Head of caudate nucleus (tissue), 42 donors: ENCODE measurements at regions of chr3 and their contacts with region 1.

Region 1: DNA sequence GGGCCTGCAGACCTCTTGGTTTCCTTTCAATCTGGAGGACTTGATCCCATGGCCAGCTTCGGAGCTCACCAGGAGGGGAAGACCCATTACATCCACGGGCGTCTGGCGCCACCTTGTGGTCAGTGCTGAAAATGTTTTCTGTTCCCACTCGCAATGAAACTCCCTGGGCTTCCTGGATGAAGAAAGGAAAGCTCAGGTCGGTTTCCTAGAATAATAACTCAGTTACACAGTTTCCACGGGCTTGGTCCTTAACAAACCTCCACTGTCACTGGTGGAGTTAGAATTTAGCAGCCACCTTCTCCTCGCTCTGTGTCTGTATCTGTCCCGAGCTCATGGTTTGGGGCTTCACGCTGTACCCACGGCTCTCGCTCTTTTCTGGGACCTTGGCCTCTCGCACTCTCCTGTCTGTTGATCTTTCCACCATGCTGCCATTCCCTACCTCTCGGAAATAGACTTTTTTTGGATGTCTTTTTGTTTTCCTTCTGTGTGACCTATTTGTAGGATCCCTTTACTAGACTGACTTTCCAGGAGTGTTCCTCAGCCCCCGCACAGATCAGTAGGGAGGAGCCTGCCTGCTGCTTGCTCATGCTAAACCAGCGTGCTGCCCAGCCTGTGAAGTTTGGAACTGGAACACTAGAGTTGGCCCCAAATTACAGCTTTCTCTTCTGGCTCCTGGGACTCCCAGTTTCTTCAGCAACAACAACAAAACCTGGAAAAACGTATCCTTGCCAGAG is 56.3 kb downstream of the IL20RB start:
- DNase-seq: peak; percentile 74 to 98 (median 94)

Region 2: DNA sequence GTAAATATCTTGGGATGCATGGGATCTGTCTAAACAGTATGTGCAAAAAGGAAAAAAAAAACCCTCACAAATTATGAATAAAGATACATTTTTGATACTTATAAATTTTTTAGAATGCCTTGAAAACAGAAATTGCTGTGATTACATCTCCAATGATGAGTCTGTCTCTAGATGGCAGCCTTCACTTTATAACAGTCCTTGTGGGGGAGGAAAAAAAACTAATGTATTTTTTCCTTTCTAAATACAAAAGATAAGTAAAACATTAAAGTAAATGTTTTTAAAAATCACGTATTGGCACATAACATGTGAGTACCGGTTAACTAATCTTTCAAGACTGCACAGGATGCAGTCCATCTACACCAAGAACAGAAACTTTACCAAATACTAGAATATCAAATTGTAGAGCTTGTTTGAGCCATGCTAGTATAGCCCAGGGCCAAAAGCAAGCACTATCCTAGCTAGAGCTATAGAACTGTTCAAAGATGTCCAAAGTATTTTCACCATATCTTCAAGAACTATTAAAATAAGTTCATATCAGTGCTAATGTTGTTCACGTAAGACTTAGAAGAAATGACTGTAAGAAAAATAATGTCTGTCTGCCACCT is 468.4 kb before region 1 on chr3:
- intact Hi-C with region 1: loop called (anchors 10 kb)
- DNase-seq: peak in 2 of 42 donors; percentile 4 to 44

Region 3: GRCh38 chr3:137294139-137294538 is 280.0 kb after region 1 on chr3:
- intact Hi-C with region 1: no loop called
- DNase-seq: no peak